ENCODE measurements at regions of chr11 and their contacts with region 1.

Region 1: GRCh38 chr11:65418711-65419459 is 3.7 kb upstream of the NEAT1 start:
- DNase-seq: peak; percentile 88
- CTCF ChIP-seq: no peak

Region 2: GRCh38 chr11:65375012-65375411 is 43.9 kb before region 1 on chr11:
- CTCF ChIA-PET with region 1: interaction called, 13 read pairs
- POLR2A ChIA-PET with region 1: interaction called, 7 read pairs
- DNase-seq: no peak
- CTCF ChIP-seq: no peak

Region 3: DNA sequence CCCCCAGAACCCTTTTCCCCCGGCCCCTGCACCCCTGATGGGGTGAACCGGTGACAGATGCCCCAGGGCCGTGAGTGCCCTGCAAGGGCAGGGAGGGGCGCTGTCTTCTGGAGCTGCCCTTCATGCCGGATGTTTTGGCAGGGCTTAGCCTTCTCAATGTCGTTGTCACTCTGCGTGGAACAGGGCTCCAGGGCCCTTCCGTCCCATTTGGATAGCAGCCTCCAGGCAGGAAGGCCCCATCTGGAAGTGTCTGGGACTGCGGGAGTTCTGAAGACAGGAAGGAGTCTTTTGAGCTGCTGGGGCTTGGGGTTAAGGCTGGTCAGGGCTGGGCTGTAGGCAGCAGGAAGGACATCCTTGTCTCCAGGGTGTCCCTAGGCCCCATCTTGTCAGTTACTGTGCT is 27.9 kb before region 1 on chr11:
- CTCF ChIA-PET with region 1: interaction called, 31 read pairs
- POLR2A ChIA-PET with region 1: interaction called, 11 read pairs
- DNase-seq: no peak
- CTCF ChIP-seq: no peak

Region 4: GRCh38 chr11:65403607-65404121 is 15.2 kb before region 1 on chr11:
- CTCF ChIA-PET with region 1: interaction called, 85 read pairs
- POLR2A ChIA-PET with region 1: interaction called, 11 read pairs
- DNase-seq: peak; percentile 62
- CTCF ChIP-seq: no peak

Region 5: GRCh38 chr11:65471410-65471762 is 52.5 kb after region 1 on chr11:
- CTCF ChIA-PET with region 1: interaction called, 61 read pairs
- POLR2A ChIA-PET with region 1: interaction called, 30 read pairs
- DNase-seq: peak; percentile 45
- CTCF ChIP-seq: peak; percentile 70

Region 6: GRCh38 chr11:65487413-65488272 is 68.8 kb after region 1 on chr11:
- CTCF ChIA-PET with region 1: interaction called, 24 read pairs
- POLR2A ChIA-PET with region 1: interaction called, 620 read pairs
- DNase-seq: peak; percentile 78
- CTCF ChIP-seq: no peak

Region 7: GRCh38 chr11:65506770-65507505 is 88.1 kb after region 1 on chr11:
- CTCF ChIA-PET with region 1: interaction called, 72 read pairs
- POLR2A ChIA-PET with region 1: interaction called, 620 read pairs
- DNase-seq: no peak
- CTCF ChIP-seq: no peak